ENCODE measurements at regions of chr2 and their contacts with region 1.

Region 1: GRCh38 chr2:102251042-102251848 is 60.1 kb upstream of the IL1RL1 start:
- DNase-seq: peak; percentile 56
- H3K4me3 Mint-ChIP-seq: peak overlapping the region; percentile 60
- H3K27ac Mint-ChIP-seq: peak overlapping the region; percentile 78
- H3K4me1 Mint-ChIP-seq: peaks cover 43% of the 10 kb centered on the region
- H3K27me3 Mint-ChIP-seq: no peaks in the 10 kb centered on the region

Region 2: DNA sequence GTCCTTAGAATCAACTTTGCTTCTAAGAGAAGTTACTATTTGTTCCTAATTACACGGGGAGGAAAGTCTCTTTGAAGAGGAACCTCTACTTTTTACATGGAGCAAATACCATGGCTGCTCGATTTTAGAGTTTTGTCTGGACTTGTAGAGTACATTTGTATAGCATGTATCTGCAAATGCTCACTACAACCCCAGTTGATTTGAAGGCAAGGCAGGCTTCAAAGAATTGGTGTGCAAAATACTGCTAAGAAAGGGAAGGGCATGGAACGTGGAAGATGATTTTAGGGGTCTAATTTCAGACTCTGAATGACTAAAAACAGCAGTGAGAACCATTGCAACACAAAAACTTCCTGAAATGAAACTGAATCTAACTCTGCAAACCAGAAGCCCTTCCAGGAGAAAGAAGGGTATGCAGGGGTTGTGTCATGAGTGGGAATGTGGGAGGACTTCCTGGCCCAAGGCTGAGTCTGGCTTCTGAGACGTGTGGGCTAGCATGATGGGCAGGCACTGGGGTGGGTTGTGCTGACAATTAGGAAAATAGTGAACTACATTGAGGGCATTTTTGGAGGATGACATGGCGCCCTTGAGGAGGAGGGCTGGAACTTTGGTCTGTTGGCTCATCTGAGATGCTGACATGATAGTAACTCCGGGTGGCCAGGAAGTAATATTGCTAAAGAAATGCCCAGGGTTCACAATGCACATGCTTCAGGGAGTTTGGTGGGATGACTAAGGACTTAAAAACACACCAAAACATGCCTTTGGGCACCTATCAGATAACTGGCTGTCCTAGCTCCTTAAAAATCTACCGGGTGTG is 278.4 kb before region 1 on chr2:
- CTCF ChIA-PET with region 1: no interaction called
- POLR2A ChIA-PET with region 1: no interaction called
- DNase-seq: no peak
- H3K4me3 Mint-ChIP-seq: no peak overlapping the region
- H3K27ac Mint-ChIP-seq: no peak overlapping the region
- H3K4me1 Mint-ChIP-seq: peaks cover 12% of the 10 kb centered on the region
- H3K27me3 Mint-ChIP-seq: no peaks in the 10 kb centered on the region

Region 3: GRCh38 chr2:102166189-102166845 is 84.9 kb before region 1 on chr2:
- CTCF ChIA-PET with region 1: no interaction called
- POLR2A ChIA-PET with region 1: no interaction called
- DNase-seq: no peak
- H3K4me3 Mint-ChIP-seq: no peak overlapping the region
- H3K27ac Mint-ChIP-seq: no peak overlapping the region
- H3K4me1 Mint-ChIP-seq: peaks cover 5% of the 10 kb centered on the region
- H3K27me3 Mint-ChIP-seq: no peaks in the 10 kb centered on the region

Region 4: GRCh38 chr2:102235491-102235890 is 15.8 kb before region 1 on chr2:
- CTCF ChIA-PET with region 1: interaction called, 44 read pairs
- POLR2A ChIA-PET with region 1: no interaction called
- DNase-seq: no peak
- H3K4me3 Mint-ChIP-seq: no peak overlapping the region
- H3K27ac Mint-ChIP-seq: no peak overlapping the region
- H3K4me1 Mint-ChIP-seq: peaks cover 29% of the 10 kb centered on the region
- H3K27me3 Mint-ChIP-seq: no peaks in the 10 kb centered on the region

Region 5: GRCh38 chr2:102268510-102269209 is 17.4 kb after region 1 on chr2:
- CTCF ChIA-PET with region 1: interaction called, 10 read pairs
- POLR2A ChIA-PET with region 1: no interaction called
- DNase-seq: no peak
- H3K4me3 Mint-ChIP-seq: no peak overlapping the region
- H3K27ac Mint-ChIP-seq: no peak overlapping the region
- H3K4me1 Mint-ChIP-seq: peaks cover 28% of the 10 kb centered on the region
- H3K27me3 Mint-ChIP-seq: peaks cover 2% of the 10 kb centered on the region

Region 6: DNA sequence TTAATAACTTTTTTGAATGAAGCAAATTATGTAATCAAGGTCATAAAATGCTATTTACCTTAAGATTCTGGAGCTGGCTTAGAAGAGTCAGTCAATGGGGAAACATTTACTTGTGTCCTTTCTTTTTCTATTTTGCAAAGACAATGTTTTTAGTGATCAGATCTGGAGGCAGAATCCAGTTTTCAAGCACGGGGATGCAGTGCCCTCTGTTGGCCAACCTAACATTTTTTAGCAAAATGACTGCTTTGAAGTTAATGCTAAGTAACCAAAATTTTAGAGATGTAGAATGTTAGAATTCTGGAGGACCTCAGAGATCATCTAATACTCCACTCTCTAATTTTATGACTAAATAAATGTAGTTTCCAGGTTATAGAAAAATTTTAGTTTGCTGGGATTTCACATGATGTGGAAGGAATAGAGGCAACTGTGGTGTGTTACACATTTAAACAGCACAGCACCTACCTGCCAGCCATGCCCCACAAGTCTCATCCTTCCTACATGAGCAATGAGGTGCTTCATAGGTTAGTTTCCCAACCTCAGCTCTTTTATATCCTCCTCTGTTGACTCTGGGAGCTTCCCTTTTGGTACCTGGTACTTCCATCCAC is 198.2 kb after region 1 on chr2:
- CTCF ChIA-PET with region 1: interaction called, 10 read pairs
- POLR2A ChIA-PET with region 1: interaction called, 3 read pairs
- DNase-seq: peak; percentile 80
- H3K4me3 Mint-ChIP-seq: no peak overlapping the region
- H3K27ac Mint-ChIP-seq: no peak overlapping the region
- H3K4me1 Mint-ChIP-seq: peaks cover 18% of the 10 kb centered on the region
- H3K27me3 Mint-ChIP-seq: no peaks in the 10 kb centered on the region